Dorsolateral prefrontal cortex (tissue), 120 donors: ENCODE measurements at regions of chr10 and their contacts with region 1.

Region 1: DNA sequence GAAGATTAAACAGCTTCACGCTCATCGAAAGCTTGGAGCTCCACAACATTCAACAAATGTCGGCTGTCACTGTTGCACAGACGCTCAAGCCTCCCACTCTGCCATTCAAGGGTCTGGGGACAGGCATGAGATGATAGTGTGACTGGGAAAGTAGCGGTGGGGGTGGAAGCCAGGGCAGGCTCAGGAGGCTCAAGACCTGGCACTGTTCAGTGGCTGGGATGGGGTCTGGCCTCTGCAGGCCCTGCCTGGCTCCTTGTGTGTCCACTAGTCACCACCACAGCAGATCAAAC is 13.5 kb upstream of the GTPBP4 start:
- DNase-seq: no peak
- H3K4me3 ChIP-seq: no peak overlapping the region
- H3K27ac ChIP-seq: no peak overlapping the region
- H3K27me3 ChIP-seq: no peaks in the 10 kb centered on the region
- CTCF ChIP-seq: no peak

Region 2: DNA sequence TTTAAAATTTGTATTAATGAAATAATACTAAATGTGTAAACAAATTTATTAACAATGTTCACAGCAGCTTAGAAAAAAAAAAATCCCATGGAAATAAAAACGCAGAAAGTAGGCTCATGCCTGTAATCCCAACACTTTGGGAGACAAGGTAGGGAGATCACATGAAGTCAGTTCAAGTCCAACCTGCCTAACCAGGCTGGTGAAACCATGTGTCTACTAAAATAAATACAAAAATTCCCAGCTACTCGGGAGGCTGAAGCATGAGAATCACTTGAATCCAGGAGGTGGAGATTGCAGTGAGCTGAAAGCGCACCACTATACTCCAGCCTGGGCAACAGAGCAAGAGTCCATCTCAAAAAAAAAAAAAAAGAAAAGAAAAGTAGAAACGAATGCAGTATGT is 79.4 kb before region 1 on chr10:
- intact Hi-C with region 1: no loop called
- DNase-seq: no peak
- H3K4me3 ChIP-seq: no peak overlapping the region
- H3K27ac ChIP-seq: no peak overlapping the region
- H3K27me3 ChIP-seq: no peaks in the 10 kb centered on the region
- CTCF ChIP-seq: no peak

Region 3: GRCh38 chr10:944034-944831 is 30.5 kb before region 1 on chr10:
- intact Hi-C with region 1: loop called in 1 of 2 experiments (anchors 5 kb)
- DNase-seq: peak in 3 of 10 donors; percentile 19 to 55 (median 41)
- H3K4me3 ChIP-seq: peak overlapping the region in 9 of 59 donors; percentile 2 to 43 (median 16)
- H3K27ac ChIP-seq: peak overlapping the region in 12 of 59 donors; percentile 1 to 53 (median 24)
- H3K27me3 ChIP-seq: no peaks in the 10 kb centered on the region
- CTCF ChIP-seq: no peak